Dorsolateral prefrontal cortex (tissue), 120 donors: ENCODE measurements at regions of chr5 and their contacts with region 1.

Region 1: GRCh38 chr5:167723254-167723871 is 568.1 kb upstream of the WWC1 start:
- DNase-seq: peak; percentile 55 to 83 (median 68)
- H3K4me3 ChIP-seq: no peak overlapping the region
- H3K27ac ChIP-seq: no peak overlapping the region
- H3K27me3 ChIP-seq: peaks cover 0 to 5% (median 0%) of the 10 kb centered on the region in 45 donors
- CTCF ChIP-seq: peak; percentile 75 to 97 (median 90)

Region 2: DNA sequence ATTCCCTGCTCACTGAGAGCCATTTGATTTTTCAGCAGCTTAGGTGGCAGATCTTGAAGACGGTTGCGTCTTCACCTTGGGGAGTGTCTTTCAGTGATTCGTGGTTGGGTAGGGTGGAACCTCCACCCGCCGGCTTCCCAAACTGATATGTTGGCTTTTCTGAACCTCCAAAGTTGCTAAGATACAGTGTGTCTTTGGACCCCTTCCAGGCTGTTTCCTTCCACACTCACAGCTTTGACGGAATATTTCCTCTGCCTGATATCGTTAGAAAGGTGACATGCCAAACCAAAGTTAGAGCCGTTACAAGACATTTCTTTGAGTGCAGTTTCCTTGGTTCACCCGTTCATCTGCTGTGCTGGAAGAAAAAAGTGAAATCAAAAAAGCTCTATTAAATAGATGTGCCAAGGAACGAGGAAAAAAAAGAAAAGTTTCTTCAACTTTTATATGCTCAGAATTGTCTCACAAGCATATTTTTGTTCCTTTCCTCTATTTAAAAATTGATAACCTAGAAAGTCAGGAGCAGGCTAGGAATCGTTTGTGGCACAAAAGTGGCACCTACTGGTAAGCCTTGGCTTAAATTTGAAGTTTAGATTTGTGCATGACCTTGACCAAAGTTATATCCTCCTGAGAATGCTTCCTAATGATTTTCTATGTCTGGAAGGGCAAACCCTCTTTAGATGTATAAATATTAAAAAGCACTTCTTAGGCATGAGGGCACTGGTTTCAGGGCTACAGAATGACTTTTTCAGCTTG is 297.4 kb after region 1 on chr5:
- intact Hi-C with region 1: loop called (anchors 5 to 10 kb)
- DNase-seq: no peak
- H3K4me3 ChIP-seq: no peak overlapping the region
- H3K27ac ChIP-seq: no peak overlapping the region
- H3K27me3 ChIP-seq: no peaks in the 10 kb centered on the region
- CTCF ChIP-seq: peak in 41 of 56 donors; percentile 11 to 56 (median 30)

Region 3: DNA sequence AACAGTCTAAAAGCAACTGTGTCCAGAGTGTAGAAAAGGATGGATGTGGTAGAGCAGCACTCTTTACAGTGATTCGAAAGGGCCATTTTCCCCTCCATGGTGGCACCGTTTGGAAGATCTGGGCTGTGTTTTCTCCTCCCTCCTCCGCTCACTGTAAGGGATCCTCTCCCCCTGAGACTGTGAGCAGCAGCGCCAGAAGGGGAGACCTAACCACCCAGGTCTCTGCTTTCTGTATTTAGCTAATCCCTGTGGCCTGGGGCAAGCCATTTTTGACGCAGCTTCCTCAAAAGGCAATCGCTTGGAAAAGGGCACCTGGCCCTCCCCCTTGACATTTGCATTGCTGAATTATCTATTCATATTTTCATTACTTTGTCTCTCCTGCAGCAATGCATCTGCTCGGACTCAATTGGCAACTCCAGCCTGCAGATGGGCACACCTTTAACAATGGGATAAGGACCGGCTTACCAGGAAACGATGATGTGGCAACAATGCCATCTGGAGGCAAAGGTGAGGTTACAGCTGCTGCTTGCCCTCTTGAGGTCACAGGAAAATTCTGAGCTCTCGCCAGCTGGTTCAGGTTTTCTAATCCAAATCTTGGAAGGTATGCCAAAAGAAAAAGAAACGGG is 323.8 kb after region 1 on chr5:
- intact Hi-C with region 1: loop called in 1 of 2 experiments (anchors 2 kb)
- DNase-seq: peak in 5 of 10 donors; percentile 14 to 45 (median 25)
- H3K4me3 ChIP-seq: no peak overlapping the region
- H3K27ac ChIP-seq: peak overlapping the region in 1 of 59 donors; percentile 8
- H3K27me3 ChIP-seq: no peaks in the 10 kb centered on the region
- CTCF ChIP-seq: peak in 52 of 56 donors; percentile 23 to 70 (median 46)